IMR-90 (cell line): ENCODE measurements at regions of chr16 and their contacts with region 1.

Region 1: GRCh38 chr16:30407102-30407803 is at the start of gene ZNF771:
- DNase-seq: peak; percentile 76
- ATAC-seq: peak; percentile 96
- H3K4me3 ChIP-seq: peak within 1 kb of the TSS; percentile 71
- H3K27ac ChIP-seq: peak within 1 kb of the TSS; percentile 84
- H3K4me1 ChIP-seq: peaks cover 11% of the 10 kb centered on the region
- H3K27me3 ChIP-seq: no peaks in the 10 kb centered on the region
- CTCF ChIP-seq: no peak
- POLR2A ChIP-seq: peak; percentile 64; the same call in 1 of the 2 replicates
- RAD21 ChIP-seq: no peak
- total RNA-seq, gene ZNF771: 5.2 and 5.8 TPM in 2 replicates

Region 2: GRCh38 chr16:30075507-30076275 is 331.6 kb before region 1 on chr16 and contains the start of gene PPP4C:
- CTCF ChIA-PET with region 1: no interaction called
- POLR2A ChIA-PET with region 1: no interaction called
- dilution Hi-C with region 1: no loop called
- in situ Hi-C with region 1: loop called (anchors 10 kb)
- intact Hi-C with region 1: no loop called
- DNase-seq: peak; percentile 88
- ATAC-seq: peak; percentile 85
- H3K4me3 ChIP-seq: peak within 1 kb of the TSS; percentile 85
- H3K27ac ChIP-seq: peak within 1 kb of the TSS; percentile 88
- H3K4me1 ChIP-seq: peaks cover 11% of the 10 kb centered on the region
- H3K27me3 ChIP-seq: no peaks in the 10 kb centered on the region
- CTCF ChIP-seq: 0 out of 2 replicates have a peak, but pooled peaks have one; percentile 11
- POLR2A ChIP-seq: peak; percentile 88
- RAD21 ChIP-seq: no peak
- total RNA-seq, gene PPP4C: 209 and 222 TPM in 2 replicates

Region 3: GRCh38 chr16:30112197-30113030 is 294.8 kb before region 1 on chr16:
- CTCF ChIA-PET with region 1: no interaction called
- POLR2A ChIA-PET with region 1: no interaction called
- dilution Hi-C with region 1: no loop called
- in situ Hi-C with region 1: no loop called
- intact Hi-C with region 1: loop called (anchors 5 kb)
- DNase-seq: peak; percentile 42
- ATAC-seq: peak; percentile 65
- H3K4me3 ChIP-seq: no peak overlapping the region
- H3K27ac ChIP-seq: no peak overlapping the region
- H3K4me1 ChIP-seq: no peaks in the 10 kb centered on the region; the same call in 1 of the 2 replicates
- H3K27me3 ChIP-seq: no peaks in the 10 kb centered on the region
- CTCF ChIP-seq: peak; percentile 64
- POLR2A ChIP-seq: no peak
- RAD21 ChIP-seq: peak; percentile 73

Region 4: DNA sequence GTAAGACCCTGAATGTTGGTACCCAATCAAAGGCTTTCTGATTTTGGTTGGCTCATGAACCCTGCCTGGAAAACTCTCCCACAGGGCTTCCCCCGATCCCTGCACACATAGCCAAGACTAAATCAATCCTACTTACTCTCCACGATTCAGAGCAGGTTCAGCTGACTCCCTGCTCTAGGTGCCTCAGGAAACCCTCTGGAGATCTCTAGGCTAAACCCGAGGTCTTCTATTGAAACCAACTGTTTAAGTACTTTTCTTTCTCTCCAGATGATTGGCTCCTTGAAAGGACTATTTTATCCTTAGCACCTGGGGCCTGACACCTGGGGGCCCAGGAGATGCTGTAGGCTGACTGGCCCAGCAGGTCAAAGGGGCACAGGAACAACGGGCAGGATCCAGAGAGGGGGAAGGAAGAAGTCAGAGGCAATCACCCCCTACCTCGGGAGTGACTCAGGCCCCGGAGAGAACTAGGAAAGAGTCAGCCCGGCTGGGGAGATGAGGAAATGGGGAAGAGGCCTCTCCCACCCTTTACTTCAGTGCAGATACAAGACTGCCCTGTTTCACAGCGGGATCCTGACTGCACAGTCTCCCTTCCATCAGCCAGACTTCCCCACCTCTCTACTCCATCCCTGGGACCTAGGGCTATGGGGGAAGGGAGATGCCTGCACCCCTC is 39.0 kb before region 1 on chr16:
- CTCF ChIA-PET with region 1: no interaction called
- POLR2A ChIA-PET with region 1: interaction called, 5 read pairs
- dilution Hi-C with region 1: no loop called
- in situ Hi-C with region 1: no loop called
- intact Hi-C with region 1: loop called (anchors 1 kb)
- DNase-seq: peak; percentile 59
- ATAC-seq: peak; percentile 4
- H3K4me3 ChIP-seq: peak overlapping the region; percentile 86
- H3K27ac ChIP-seq: peak overlapping the region; percentile 82
- H3K4me1 ChIP-seq: peaks cover 3% of the 10 kb centered on the region; the same call in 1 of the 2 replicates
- H3K27me3 ChIP-seq: no peaks in the 10 kb centered on the region
- CTCF ChIP-seq: no peak
- POLR2A ChIP-seq: peak; percentile 57; the same call in 1 of the 2 replicates
- RAD21 ChIP-seq: no peak

Region 5: GRCh38 chr16:30602616-30603277 is 195.5 kb after region 1 on chr16:
- CTCF ChIA-PET with region 1: no interaction called
- POLR2A ChIA-PET with region 1: interaction called, 14 read pairs
- dilution Hi-C with region 1: no loop called
- in situ Hi-C with region 1: no loop called
- intact Hi-C with region 1: no loop called
- DNase-seq: peak; percentile 37
- ATAC-seq: peak; percentile 46
- H3K4me3 ChIP-seq: no peak overlapping the region
- H3K27ac ChIP-seq: no peak overlapping the region; the same call in 1 of the 2 replicates
- H3K4me1 ChIP-seq: peaks cover 6% of the 10 kb centered on the region; the same call in 1 of the 2 replicates
- H3K27me3 ChIP-seq: no peaks in the 10 kb centered on the region
- CTCF ChIP-seq: no peak
- POLR2A ChIP-seq: no peak
- RAD21 ChIP-seq: no peak